Activated CD4-positive, alpha-beta memory T cell treated with anti-CD3 and anti-CD28 coated beads, Interleukin-2, amount 10 ng/mL, durations not matched to agents 7 days and 5 days (primary cell): ENCODE measurements at regions of chr16 and their contacts with region 1.

Region 1: DNA sequence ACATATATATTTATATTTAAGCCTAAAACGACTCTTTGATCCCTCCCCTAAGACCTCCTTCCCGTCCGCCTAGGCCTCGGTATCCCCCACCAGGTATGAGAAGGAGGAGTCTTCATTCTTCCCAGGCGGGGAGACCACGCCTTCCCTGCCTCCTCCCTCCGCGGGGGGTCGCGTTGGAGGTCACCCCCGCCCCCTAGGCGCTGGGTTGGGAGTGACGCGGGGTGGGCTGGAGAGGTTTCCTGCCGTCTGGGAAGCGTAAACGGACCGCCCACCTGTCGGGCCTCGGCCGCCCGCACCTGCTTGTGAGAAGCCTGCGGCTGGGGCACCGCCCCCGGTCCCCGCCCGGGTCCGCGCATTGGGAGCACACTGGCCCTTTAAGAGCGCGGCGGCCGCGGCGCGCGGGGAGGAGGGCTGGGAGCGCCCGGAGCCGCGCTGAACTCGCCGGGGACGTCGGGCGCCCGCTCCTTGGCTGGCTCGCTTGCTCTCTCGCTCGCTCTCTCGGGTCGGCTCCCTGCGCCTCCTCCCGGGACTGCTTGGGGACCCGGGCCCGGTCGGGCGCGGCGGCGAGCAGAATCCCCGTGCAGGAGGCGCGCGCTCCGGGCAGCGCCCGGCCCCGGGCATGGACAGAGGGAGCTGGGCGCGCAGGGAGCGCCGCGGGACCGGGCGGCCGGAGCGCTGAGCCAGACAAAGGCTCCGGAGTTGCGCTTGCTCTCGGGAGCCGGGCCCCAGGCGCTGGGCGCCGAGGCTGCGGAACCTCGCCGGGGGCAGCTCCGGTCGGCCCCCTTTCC is at the start of gene MMP15:
- DNase-seq: peak; percentile 68
- H3K4me3 Mint-ChIP-seq: peak within 1 kb of the TSS; percentile 84
- H3K27ac Mint-ChIP-seq: peak within 1 kb of the TSS; percentile 26
- H3K4me1 Mint-ChIP-seq: peaks cover 17% of the 10 kb centered on the region
- H3K27me3 Mint-ChIP-seq: peaks cover 23% of the 10 kb centered on the region
- total RNA-seq, gene MMP15: 0.68 to 1.1 TPM

Region 2: GRCh38 chr16:57955572-57956188 is 69.9 kb before region 1 on chr16:
- CTCF ChIA-PET with region 1: no interaction called
- POLR2A ChIA-PET with region 1: no interaction called
- DNase-seq: no peak
- H3K4me3 Mint-ChIP-seq: no peak overlapping the region
- H3K27ac Mint-ChIP-seq: no peak overlapping the region
- H3K4me1 Mint-ChIP-seq: no peaks in the 10 kb centered on the region
- H3K27me3 Mint-ChIP-seq: no peaks in the 10 kb centered on the region

Region 3: DNA sequence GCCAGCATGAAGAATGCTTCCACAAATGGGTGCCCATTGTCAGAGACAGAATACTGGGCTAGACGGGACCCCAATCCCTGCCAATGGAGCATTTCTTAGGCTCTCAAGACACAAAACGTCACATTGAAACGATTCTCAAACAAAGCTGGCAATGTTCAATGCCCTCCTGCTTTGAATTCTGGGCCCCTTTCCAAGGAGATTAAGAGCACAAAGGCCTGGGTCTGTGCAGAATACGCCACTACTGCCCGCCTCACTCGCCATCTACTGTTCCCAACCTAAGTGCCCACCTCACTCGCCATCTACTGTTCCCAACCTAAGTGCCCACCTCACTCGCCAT is 93.9 kb after region 1 on chr16:
- CTCF ChIA-PET with region 1: interaction called, 10 read pairs
- POLR2A ChIA-PET with region 1: no interaction called
- DNase-seq: no peak
- H3K4me3 Mint-ChIP-seq: no peak overlapping the region
- H3K27ac Mint-ChIP-seq: no peak overlapping the region
- H3K4me1 Mint-ChIP-seq: peaks cover 29% of the 10 kb centered on the region
- H3K27me3 Mint-ChIP-seq: no peaks in the 10 kb centered on the region

Region 4: DNA sequence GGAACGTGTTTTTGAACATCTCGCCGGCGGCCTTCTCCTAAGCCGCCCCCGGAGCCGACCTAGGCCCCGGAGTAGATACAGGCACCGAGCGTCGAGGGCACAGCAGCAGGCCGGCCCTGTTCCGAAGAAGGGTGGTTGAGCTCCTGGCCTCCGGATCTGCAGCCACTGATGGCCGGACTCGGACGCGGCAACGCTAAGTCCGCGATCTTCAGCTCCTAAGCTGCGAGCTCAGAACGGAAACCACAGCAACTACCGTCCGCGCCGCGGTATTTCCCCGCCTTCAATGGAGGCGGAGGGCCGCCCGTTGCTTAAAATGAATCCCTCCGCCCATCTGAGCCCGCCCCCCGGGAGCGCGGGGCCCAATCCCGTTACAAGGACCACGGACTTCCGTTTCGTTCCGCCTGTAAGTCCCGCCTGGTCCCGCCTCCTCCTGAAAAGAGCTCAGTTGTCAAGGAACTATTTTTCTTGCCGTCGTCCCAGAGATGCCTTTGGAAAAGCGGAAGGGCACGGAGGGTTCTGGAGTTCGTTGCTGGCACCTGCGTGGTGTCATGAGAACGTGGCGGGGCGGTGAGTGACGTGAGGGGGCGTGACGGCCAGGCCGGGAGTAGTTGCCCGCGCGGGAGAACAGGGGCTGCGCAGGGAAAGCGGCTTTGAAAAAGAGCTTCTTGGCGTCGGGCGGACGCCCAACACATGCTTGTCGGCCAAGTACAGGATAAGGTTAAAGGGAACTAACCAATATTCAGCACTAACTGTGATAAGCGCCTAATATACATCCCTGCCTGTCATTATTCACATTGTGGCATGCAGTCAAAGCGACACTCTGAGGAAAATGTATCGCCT is 103.8 kb after region 1 on chr16 and contains the start of gene CFAP20:
- CTCF ChIA-PET with region 1: interaction called, 7 read pairs
- POLR2A ChIA-PET with region 1: interaction called, 12 read pairs
- DNase-seq: peak; percentile 98
- H3K4me3 Mint-ChIP-seq: peak within 1 kb of the TSS; percentile 87
- H3K27ac Mint-ChIP-seq: peak within 1 kb of the TSS; percentile 80
- H3K4me1 Mint-ChIP-seq: peaks cover 37% of the 10 kb centered on the region
- H3K27me3 Mint-ChIP-seq: no peaks in the 10 kb centered on the region
- total RNA-seq, gene CFAP20: 36.1 to 37.8 TPM

Region 5: DNA sequence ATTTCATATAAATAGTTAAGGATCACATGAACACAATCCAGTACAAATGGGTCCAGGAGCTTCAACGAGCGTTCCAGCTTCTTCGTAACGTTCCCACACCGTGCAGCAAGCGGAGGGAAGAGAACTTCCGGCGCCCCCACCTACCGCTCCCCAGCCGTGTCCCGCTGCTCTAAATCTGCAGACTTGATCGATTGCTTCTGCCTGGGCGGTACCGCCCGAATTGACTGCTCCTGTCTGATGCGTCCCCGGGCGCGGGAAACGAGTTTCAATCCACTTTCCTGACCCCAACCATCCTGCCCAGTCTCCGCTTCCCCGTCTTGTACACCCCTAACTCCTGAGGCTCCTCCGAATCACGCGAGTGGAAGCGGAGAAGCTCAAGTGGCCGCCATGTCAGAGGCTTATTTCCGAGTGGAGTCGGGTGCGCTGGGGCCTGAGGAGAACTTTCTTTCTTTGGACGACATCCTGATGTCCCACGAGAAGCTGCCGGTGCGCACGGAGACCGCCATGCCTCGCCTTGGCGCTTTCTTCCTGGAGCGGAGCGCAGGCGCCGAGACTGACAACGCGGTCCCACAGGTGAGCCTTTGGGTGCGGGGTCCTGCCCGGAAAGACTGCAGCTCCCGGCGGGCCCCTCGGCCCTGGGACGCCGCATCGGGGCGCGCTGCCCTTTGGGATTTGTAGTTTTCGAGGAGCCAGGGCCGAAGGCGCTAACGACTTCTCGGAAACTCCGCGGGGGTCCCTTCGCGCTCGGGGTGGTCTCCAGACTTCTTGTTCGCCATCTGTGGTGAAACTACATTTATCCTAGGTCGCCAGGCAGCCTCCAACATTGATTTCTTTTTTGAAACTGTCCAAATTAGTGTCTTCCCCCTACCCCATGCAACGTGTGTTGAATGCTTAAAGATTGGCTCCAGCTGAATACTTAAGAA is 366.9 kb after region 1 on chr16 and contains the start of gene GINS3:
- CTCF ChIA-PET with region 1: no interaction called
- POLR2A ChIA-PET with region 1: no interaction called
- DNase-seq: peak; percentile 88
- H3K4me3 Mint-ChIP-seq: peak within 1 kb of the TSS; percentile 100
- H3K27ac Mint-ChIP-seq: peak within 1 kb of the TSS; percentile 93
- H3K4me1 Mint-ChIP-seq: peaks cover 26% of the 10 kb centered on the region
- H3K27me3 Mint-ChIP-seq: peaks cover 19% of the 10 kb centered on the region
- total RNA-seq, gene GINS3: 10.2 to 11.0 TPM